ENCODE measurements at regions of chr19 and their contacts with region 1.

Region 1: GRCh38 chr19:6632002-6632621 is 37.8 kb downstream of the TNFSF14 start:
- DNase-seq: no peak
- H3K4me3 ChIP-seq: no peak overlapping the region
- H3K27ac ChIP-seq: no peak overlapping the region
- H3K27me3 ChIP-seq: no peaks in the 10 kb centered on the region
- CTCF ChIP-seq: peak; percentile 85

Region 2: DNA sequence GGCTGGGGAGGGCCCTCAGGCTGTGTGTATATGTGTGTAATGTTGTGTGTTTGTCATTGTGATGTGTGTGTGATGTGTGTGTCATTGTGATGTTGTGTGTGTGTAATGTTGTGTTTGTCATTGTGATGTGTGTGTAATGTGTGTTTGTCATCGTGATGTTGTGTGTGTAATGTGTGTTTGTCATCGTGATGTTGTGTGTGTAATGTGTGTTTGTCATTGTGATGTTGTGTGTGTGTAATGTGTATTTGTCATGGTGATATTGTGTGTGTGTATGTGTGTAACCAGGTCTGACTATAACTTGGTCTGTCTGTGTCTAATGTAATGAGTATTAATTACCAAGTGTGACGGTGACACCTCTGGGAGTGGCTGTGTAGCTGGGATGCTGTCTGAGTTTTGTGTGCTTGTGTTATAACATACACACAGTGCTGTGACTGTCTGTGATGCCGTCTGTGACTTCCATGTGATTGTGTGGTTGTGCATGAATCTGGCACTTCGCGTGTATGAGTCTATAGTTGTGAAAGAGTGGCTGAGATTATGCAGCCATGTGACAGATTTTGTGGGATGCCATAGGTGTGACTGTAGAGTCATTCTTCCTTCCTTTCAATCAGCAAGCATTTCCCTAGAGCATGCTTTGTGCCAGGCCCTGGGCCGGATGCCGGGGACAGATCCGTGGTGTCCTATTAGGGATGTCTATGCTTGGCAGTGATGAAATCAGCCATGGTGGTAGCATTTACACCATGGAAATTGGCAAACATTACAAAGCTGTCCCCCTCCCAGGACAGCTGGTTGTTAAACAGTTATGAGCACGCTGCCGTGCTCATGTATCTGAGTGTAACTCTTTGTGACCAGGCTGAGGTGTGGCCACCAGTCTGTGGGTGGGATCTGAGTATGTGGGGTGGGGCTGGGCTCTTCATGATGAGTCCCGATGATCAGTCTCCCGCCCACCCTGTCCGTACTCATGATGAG is 31.4 kb after region 1 on chr19:
- CTCF ChIA-PET with region 1: no interaction called
- POLR2A ChIA-PET with region 1: no interaction called
- DNase-seq: no peak
- H3K4me3 ChIP-seq: no peak overlapping the region
- H3K27ac ChIP-seq: no peak overlapping the region
- H3K27me3 ChIP-seq: peaks cover 9% of the 10 kb centered on the region
- CTCF ChIP-seq: no peak

Region 3: GRCh38 chr19:6862673-6863078 is 230.6 kb after region 1 on chr19:
- CTCF ChIA-PET with region 1: interaction called, 57 read pairs
- POLR2A ChIA-PET with region 1: no interaction called
- DNase-seq: peak; percentile 29
- H3K4me3 ChIP-seq: peak overlapping the region; percentile 22; the same call in 1 of the 2 replicates
- H3K27ac ChIP-seq: no peak overlapping the region
- H3K27me3 ChIP-seq: no peaks in the 10 kb centered on the region
- CTCF ChIP-seq: peak; percentile 88